ENCODE measurements at regions of chr5 and their contacts with region 1.

Region 1: GRCh38 chr5:141320225-141321169 is at the start of gene TAF7:
- DNase-seq: peak; percentile 88 to 94 (median 94)
- ATAC-seq: peak; percentile 94
- H3K4me3 ChIP-seq: peak within 1 kb of the TSS; percentile 95
- H3K4me3 Mint-ChIP-seq: peak within 1 kb of the TSS; percentile 90 to 100 (median 98)
- H3K27ac ChIP-seq: peak within 1 kb of the TSS; percentile 88
- H3K27ac Mint-ChIP-seq: peak within 1 kb of the TSS; percentile 97 to 100 (median 99)
- H3K4me1 ChIP-seq: peaks cover 7% of the 10 kb centered on the region in 2 donors
- H3K4me1 Mint-ChIP-seq: peaks cover 18 to 40% (median 27%) of the 10 kb centered on the region in 7 donors
- H3K27me3 ChIP-seq: no peaks in the 10 kb centered on the region
- H3K27me3 Mint-ChIP-seq: peaks cover 0 to 3% (median 0%) of the 10 kb centered on the region in 5 donors
- total RNA-seq, gene TAF7: 64.5 to 115 (median 84.9) TPM

Region 2: DNA sequence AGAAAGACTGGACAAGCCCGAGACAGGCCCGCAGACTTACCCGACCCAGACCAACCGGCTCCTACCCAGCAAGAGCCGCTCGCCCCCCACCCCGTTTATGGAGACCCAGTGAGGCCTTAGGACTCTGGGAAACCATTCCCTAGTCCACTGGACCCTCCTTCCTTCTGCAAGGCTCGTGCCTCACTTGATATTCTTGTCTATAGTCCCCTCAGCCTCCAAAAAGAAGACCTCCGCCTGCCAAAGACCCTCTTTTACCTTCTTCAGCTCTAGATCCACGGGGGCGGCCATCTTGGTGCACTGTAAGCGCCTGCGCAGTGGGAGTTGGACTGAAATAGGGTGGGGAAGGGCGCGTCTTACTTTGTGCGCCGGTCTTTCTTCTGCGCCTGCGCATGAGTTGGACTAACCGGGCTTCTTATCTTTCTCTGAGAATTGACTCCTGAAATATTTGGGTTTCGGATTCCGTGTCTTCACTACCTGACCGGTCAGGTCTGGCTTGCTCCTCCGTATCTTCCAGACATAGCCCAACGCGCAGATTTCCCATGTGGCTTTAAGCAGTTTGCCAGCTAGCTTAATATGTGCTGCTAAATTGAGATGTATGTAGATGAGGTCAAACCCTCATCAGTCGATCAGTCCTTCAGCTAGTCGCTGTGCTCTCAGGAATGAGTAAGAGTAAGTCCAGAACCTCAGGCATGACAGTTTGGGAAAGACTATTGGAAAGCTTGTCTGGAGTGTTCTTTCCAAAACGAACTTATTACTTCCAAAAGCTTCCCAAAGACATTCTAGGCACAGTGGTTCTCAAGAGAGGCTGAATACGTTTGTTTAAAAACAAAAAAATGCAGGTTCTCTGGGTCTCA is 1017.5 kb before region 1 on chr5 and contains the start of gene PFDN1:
- CTCF ChIA-PET with region 1: no interaction called
- POLR2A ChIA-PET with region 1: no interaction called
- intact Hi-C with region 1: loop called in 1 of 2 experiments (anchors 5 kb)
- DNase-seq: peak; percentile 79 to 94 (median 89)
- ATAC-seq: peak; percentile 99
- H3K4me3 ChIP-seq: peak within 1 kb of the TSS; percentile 90
- H3K4me3 Mint-ChIP-seq: peak within 1 kb of the TSS; percentile 92 to 100 (median 98)
- H3K27ac ChIP-seq: peak within 1 kb of the TSS; percentile 91
- H3K27ac Mint-ChIP-seq: peak within 1 kb of the TSS; percentile 95 to 100 (median 98)
- H3K4me1 ChIP-seq: peaks cover 10 to 11% of the 10 kb centered on the region in 2 donors
- H3K4me1 Mint-ChIP-seq: peaks cover 4 to 39% (median 33%) of the 10 kb centered on the region in 7 donors
- H3K27me3 ChIP-seq: no peaks in the 10 kb centered on the region
- H3K27me3 Mint-ChIP-seq: peaks cover 0 to 9% (median 5%) of the 10 kb centered on the region in 5 donors
- total RNA-seq, gene PFDN1: 24.8 to 52.7 (median 28.2) TPM

Region 3: DNA sequence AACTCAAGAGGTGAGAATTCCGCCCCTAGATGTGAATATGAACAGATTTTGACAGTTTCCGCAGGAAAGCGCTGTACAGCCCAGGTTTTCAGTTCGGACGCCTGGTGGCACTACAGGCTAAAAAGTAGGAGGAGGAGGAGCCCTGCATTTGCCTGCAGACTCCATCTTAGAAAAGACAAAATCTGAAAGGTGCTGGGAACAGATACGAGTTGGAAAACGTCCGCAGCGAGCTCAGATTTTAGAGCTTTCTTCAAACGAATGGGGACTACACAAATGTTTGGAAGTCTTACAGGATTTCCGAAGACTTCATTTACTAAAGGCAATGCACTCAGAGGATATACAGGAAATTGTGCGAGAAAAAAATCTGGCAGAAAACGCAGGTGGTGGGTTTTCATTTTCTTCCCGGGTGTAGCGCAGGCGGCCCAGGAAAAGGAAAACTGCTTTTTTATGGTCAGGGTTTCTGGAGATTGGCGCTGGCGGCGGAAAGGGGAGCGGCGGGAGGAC is 236.0 kb before region 1 on chr5:
- CTCF ChIA-PET with region 1: no interaction called
- POLR2A ChIA-PET with region 1: no interaction called
- intact Hi-C with region 1: loop called in 1 of 2 experiments (anchors 2 kb)
- DNase-seq: peak in 7 of 9 donors; percentile 17 to 55 (median 31)
- ATAC-seq: peak; percentile 82
- H3K4me3 ChIP-seq: peak overlapping the region; percentile 40
- H3K4me3 Mint-ChIP-seq: peak overlapping the region; percentile 77 to 95 (median 90)
- H3K27ac ChIP-seq: no peak overlapping the region
- H3K27ac Mint-ChIP-seq: peak overlapping the region in 6 of 9 donors; percentile 48 to 90 (median 80)
- H3K4me1 ChIP-seq: no peaks in the 10 kb centered on the region
- H3K4me1 Mint-ChIP-seq: peaks cover 0 to 13% (median 8%) of the 10 kb centered on the region in 7 donors
- H3K27me3 ChIP-seq: no peaks in the 10 kb centered on the region
- H3K27me3 Mint-ChIP-seq: peaks cover 6 to 64% (median 34%) of the 10 kb centered on the region in 5 donors

Region 4: DNA sequence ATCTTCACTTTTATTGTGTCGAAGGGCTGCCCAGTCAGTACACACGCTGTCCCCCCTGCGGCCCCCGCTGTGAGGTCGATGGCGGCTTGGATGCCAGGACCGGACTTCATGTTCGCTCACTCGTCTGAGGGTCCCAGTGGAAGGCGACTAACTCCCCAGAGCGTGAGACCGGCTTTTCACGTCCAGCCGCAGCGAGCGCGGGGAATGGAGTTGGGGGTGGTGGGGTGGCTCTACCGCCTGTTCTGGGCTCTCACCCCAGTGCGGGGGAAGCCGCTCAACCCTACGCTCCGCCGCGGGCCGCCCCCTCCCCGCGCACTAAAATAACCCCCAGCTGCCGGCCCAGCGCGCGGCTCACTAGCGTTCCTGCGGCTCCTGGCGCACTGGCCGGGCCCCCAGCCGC is 16.7 kb before region 1 on chr5 and contains the start of gene SLC25A2:
- CTCF ChIA-PET with region 1: no interaction called
- POLR2A ChIA-PET with region 1: no interaction called
- intact Hi-C with region 1: no loop called
- DNase-seq: no peak
- ATAC-seq: no peak
- H3K4me3 ChIP-seq: no peak within 1 kb of the TSS
- H3K4me3 Mint-ChIP-seq: peak within 1 kb of the TSS in 2 of 10 donors; percentile 21 to 26
- H3K27ac ChIP-seq: no peak within 1 kb of the TSS
- H3K27ac Mint-ChIP-seq: peak within 1 kb of the TSS in 1 of 9 donors; percentile 29
- H3K4me1 ChIP-seq: no peaks in the 10 kb centered on the region
- H3K4me1 Mint-ChIP-seq: no peaks in the 10 kb centered on the region
- H3K27me3 ChIP-seq: no peaks in the 10 kb centered on the region
- H3K27me3 Mint-ChIP-seq: no peaks in the 10 kb centered on the region
- total RNA-seq, gene SLC25A2: 0.27 to 1.1 (median 0.41) TPM

Region 5: GRCh38 chr5:141524604-141525597 is 204.4 kb after region 1 on chr5:
- CTCF ChIA-PET with region 1: interaction called, 7 read pairs
- POLR2A ChIA-PET with region 1: interaction called, 5 read pairs
- intact Hi-C with region 1: loop called in 1 of 2 experiments (anchors 1 kb)
- DNase-seq: peak; percentile 18 to 64 (median 43)
- ATAC-seq: peak; percentile 88
- H3K4me3 ChIP-seq: no peak overlapping the region
- H3K4me3 Mint-ChIP-seq: peak overlapping the region in 1 of 10 donors; percentile 21
- H3K27ac ChIP-seq: no peak overlapping the region
- H3K27ac Mint-ChIP-seq: peak overlapping the region in 8 of 9 donors; percentile 19 to 80 (median 54)
- H3K4me1 ChIP-seq: peaks cover 0 to 6% of the 10 kb centered on the region in 2 donors
- H3K4me1 Mint-ChIP-seq: peaks cover 6 to 28% (median 16%) of the 10 kb centered on the region in 7 donors
- H3K27me3 ChIP-seq: no peaks in the 10 kb centered on the region
- H3K27me3 Mint-ChIP-seq: no peaks in the 10 kb centered on the region

Region 6: DNA sequence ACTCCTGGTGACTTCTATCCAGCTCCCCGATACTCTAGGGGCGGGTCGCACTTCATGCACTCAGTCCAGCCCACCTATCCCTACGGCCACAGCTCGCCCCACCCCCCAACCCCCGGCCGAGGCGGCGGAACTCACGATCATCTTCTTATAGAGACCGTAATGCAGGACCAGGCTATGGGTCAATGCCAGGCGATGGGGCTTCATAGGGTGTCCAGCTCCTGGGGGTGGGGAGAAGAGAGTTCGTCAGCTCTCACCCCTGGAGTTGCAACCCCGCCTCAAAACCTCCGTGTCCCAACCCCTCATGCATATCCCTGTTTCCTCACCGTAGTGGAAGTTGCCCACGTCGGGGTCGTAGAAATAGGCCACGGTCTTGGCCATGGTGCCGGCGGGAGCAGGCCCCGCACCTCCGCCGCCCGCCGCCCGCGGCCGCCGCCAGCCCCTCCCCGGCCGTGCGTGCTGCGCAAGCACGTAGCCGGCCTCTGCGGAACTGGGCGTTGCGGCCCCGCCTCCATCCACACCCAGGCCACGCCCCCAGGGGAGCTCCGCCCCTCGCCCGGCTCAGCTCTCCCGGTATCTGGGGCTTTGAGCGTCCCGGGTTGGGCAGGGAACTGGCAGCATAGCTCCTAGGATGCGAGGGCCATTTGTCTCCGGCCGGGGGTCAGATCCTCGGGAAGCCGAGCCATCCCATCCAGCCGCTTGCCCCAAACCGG is 316.1 kb after region 1 on chr5 and contains the starts of genes HDAC3 and RELL2:
- CTCF ChIA-PET with region 1: no interaction called
- POLR2A ChIA-PET with region 1: interaction called, 8 read pairs
- intact Hi-C with region 1: loop called in 1 of 2 experiments (anchors 2 kb)
- DNase-seq: peak; percentile 86 to 99 (median 94)
- ATAC-seq: peak; percentile 98
- H3K4me3 ChIP-seq: peak within 1 kb of the TSS; percentile 81
- H3K4me3 Mint-ChIP-seq: peak within 1 kb of the TSS; percentile 89 to 98 (median 92)
- H3K27ac ChIP-seq: peak within 1 kb of the TSS; percentile 88
- H3K27ac Mint-ChIP-seq: peak within 1 kb of the TSS; percentile 72 to 95 (median 92)
- H3K4me1 ChIP-seq: peaks cover 23 to 24% of the 10 kb centered on the region in 2 donors
- H3K4me1 Mint-ChIP-seq: peaks cover 35 to 56% (median 46%) of the 10 kb centered on the region in 7 donors
- H3K27me3 ChIP-seq: no peaks in the 10 kb centered on the region
- H3K27me3 Mint-ChIP-seq: no peaks in the 10 kb centered on the region
- total RNA-seq, gene HDAC3: 70.0 to 92.8 (median 79.0) TPM
- total RNA-seq, gene RELL2: 14.3 to 21.7 (median 17.5) TPM

Region 7: DNA sequence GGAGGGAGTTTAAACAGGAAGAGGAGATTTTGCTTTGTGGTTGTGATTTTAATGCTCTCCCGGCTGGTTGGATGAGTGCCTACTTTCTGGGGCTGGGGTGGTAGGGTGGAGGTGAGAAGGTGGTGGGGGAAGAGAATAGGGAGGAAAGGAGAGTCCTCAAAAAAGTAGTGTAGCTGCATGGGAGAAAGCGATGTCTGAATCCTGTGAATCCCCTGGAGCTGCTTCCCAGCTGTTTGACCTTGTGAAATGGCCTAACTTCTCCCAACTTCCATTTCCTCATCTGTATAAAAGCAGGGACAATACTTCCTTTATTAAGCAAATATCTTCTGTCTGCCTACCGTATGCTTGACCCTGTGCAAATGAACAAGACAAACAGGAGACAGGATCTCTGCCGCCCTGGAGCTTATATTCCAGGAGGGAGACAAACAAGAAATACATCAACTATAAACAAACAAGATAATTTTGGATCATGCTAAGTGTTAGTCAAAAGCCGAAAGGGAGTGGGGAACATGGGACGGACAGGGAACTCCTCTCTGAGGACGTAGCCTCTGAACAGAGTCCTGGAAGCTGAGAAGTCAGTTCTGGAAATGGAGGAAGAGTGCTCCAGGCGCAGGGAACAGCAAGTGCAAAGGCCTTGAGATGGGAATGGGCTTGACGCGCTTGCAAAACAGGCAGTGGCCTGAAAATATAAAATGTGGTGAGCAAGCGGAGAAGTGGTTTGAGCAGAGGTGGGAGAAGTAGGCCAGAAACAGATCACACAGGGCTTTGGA is 900.8 kb after region 1 on chr5:
- CTCF ChIA-PET with region 1: no interaction called
- POLR2A ChIA-PET with region 1: no interaction called
- intact Hi-C with region 1: loop called in 1 of 2 experiments (anchors 5 kb)
- DNase-seq: no peak
- ATAC-seq: no peak
- H3K4me3 ChIP-seq: no peak overlapping the region
- H3K4me3 Mint-ChIP-seq: peak overlapping the region in 3 of 10 donors; percentile 17 to 31 (median 19)
- H3K27ac ChIP-seq: no peak overlapping the region
- H3K27ac Mint-ChIP-seq: peak overlapping the region in 3 of 9 donors; percentile 3 to 52 (median 6)
- H3K4me1 ChIP-seq: peaks cover 6 to 25% of the 10 kb centered on the region in 2 donors
- H3K4me1 Mint-ChIP-seq: peaks cover 18 to 39% (median 34%) of the 10 kb centered on the region in 7 donors
- H3K27me3 ChIP-seq: no peaks in the 10 kb centered on the region
- H3K27me3 Mint-ChIP-seq: peaks cover 0 to 10% (median 0%) of the 10 kb centered on the region in 5 donors